GM12878 (cell line): ENCODE measurements at regions of chr3 and their contacts with region 1.

Region 1: GRCh38 chr3:43162230-43163084 is 56.6 kb upstream of the POMGNT2 start:
- DNase-seq: no peak
- ATAC-seq: peak; percentile 86
- H3K4me3 ChIP-seq: no peak overlapping the region
- H3K27ac ChIP-seq: no peak overlapping the region
- H3K4me1 ChIP-seq: no peaks in the 10 kb centered on the region; the same call in 1 of the 2 replicates
- H3K27me3 ChIP-seq: no peaks in the 10 kb centered on the region
- CTCF ChIP-seq: peak; percentile 12 to 55 (median 19); a peak in 3 of 6 replicates
- EP300 ChIP-seq: no peak
- POLR2A ChIP-seq: no peak
- RAD21 ChIP-seq: peak; percentile 63

Region 2: GRCh38 chr3:42961633-42962032 is 200.8 kb before region 1 on chr3:
- CTCF ChIA-PET with region 1: interaction called, 30 read pairs
- POLR2A ChIA-PET with region 1: no interaction called
- RAD21 ChIA-PET with region 1: interaction called, 8 read pairs
- SMC1A ChIA-PET with region 1: interaction called, 22 read pairs
- in situ Hi-C with region 1: no loop called
- intact Hi-C with region 1: no loop called
- DNase-seq: no peak
- ATAC-seq: peak; percentile 54
- H3K4me3 ChIP-seq: no peak overlapping the region
- H3K27ac ChIP-seq: no peak overlapping the region
- H3K4me1 ChIP-seq: no peaks in the 10 kb centered on the region
- H3K27me3 ChIP-seq: no peaks in the 10 kb centered on the region
- CTCF ChIP-seq: peak; percentile 42 to 54 (median 45); a peak in 4 of 6 replicates
- EP300 ChIP-seq: no peak
- POLR2A ChIP-seq: no peak
- RAD21 ChIP-seq: peak; percentile 49; the same call in 1 of the 2 replicates

Region 3: DNA sequence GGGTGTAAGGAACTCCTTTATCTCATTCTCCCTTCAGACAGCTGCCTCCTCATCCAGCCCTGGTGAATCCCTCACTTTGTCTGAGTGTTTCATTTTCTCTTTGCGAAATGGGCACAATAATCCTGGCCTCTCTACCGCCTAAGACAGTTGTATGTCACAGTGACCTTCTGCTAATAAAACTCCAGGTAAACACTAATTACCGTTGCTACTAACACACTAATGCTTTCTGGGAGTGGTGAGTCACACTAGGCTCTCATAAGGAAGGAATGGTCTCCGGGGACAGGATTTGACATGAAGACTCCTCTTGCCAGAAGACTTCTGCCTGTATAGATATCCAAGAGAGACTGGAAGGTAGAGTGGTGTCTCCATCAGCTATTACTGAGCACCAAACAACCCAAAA is 52.2 kb after region 1 on chr3:
- CTCF ChIA-PET with region 1: interaction called, 13 read pairs
- POLR2A ChIA-PET with region 1: no interaction called
- RAD21 ChIA-PET with region 1: interaction called, 13 read pairs
- SMC1A ChIA-PET with region 1: interaction called, 4 read pairs
- in situ Hi-C with region 1: no loop called
- intact Hi-C with region 1: no loop called
- DNase-seq: no peak
- ATAC-seq: no peak
- H3K4me3 ChIP-seq: no peak overlapping the region
- H3K27ac ChIP-seq: no peak overlapping the region
- H3K4me1 ChIP-seq: no peaks in the 10 kb centered on the region
- H3K27me3 ChIP-seq: no peaks in the 10 kb centered on the region
- CTCF ChIP-seq: no peak
- EP300 ChIP-seq: no peak
- POLR2A ChIP-seq: no peak
- RAD21 ChIP-seq: no peak

Region 4: DNA sequence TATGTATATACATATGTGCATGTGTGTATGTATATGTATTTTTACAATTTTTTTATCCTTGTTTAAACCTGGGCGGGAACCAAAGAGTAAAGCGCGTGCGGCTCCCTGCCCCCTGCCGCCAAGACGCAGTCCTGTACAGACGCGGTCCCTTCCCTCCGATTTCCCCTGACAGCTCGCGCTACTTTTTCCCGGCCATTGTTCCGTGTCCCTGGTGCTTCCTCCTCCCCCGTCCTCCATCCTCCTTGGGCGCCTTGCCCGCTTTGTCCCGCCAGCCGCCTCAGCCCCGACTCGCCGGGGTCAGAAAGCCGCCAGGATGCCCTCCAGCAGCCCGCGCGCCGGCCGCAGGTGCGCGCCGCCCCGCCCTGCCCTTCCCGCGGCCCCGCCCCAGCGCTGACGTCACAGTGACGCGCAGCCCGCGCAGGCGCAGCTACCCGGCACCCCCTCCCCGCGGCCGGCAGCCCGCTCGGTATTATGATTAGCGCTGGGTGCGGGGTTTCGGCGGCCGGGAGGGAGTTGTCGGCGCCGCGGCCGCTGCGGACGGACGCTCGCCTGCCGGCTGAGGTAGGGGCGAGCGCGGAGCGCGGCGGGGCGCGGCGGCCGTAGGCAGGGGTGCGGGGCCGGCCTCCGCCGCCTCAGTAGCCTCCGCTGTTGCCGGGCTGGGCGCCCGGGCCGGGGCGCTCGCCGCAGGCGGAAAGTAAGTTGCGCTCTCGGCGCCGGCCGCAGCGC is 123.8 kb after region 1 on chr3 and contains the start of gene SNRK:
- CTCF ChIA-PET with region 1: interaction called, 4 read pairs
- POLR2A ChIA-PET with region 1: no interaction called
- RAD21 ChIA-PET with region 1: interaction called, 8 read pairs
- SMC1A ChIA-PET with region 1: interaction called, 10 read pairs
- in situ Hi-C with region 1: no loop called
- intact Hi-C with region 1: no loop called
- DNase-seq: no peak
- ATAC-seq: peak; percentile 85
- H3K4me3 ChIP-seq: peak within 1 kb of the TSS; percentile 82
- H3K27ac ChIP-seq: peak within 1 kb of the TSS; percentile 68
- H3K4me1 ChIP-seq: peaks cover 11% of the 10 kb centered on the region
- H3K27me3 ChIP-seq: peaks cover 0 to 2% of the 10 kb centered on the region in 2 experiments; a peak in 1 of 4 replicates
- CTCF ChIP-seq: peak in 1 of 3 experiments; percentile 10; a peak in 2 of 6 replicates
- EP300 ChIP-seq: no peak
- POLR2A ChIP-seq: peak; percentile 68
- RAD21 ChIP-seq: no peak
- polyA plus RNA-seq, gene SNRK: 1.6 to 2.2 TPM

Region 5: GRCh38 chr3:43378066-43378935 is 215.8 kb after region 1 on chr3:
- CTCF ChIA-PET with region 1: interaction called, 84 read pairs
- POLR2A ChIA-PET with region 1: no interaction called
- RAD21 ChIA-PET with region 1: interaction called, 31 read pairs
- SMC1A ChIA-PET with region 1: interaction called, 79 read pairs
- in situ Hi-C with region 1: loop called (anchors 5 kb)
- intact Hi-C with region 1: loop called (anchors 1 kb)
- DNase-seq: peak; percentile 4
- ATAC-seq: peak; percentile 97
- H3K4me3 ChIP-seq: no peak overlapping the region
- H3K27ac ChIP-seq: no peak overlapping the region
- H3K4me1 ChIP-seq: no peaks in the 10 kb centered on the region
- H3K27me3 ChIP-seq: no peaks in the 10 kb centered on the region
- CTCF ChIP-seq: peak; percentile 81 to 85 (median 81)
- EP300 ChIP-seq: no peak
- POLR2A ChIP-seq: no peak
- RAD21 ChIP-seq: peak; percentile 86

Region 6: DNA sequence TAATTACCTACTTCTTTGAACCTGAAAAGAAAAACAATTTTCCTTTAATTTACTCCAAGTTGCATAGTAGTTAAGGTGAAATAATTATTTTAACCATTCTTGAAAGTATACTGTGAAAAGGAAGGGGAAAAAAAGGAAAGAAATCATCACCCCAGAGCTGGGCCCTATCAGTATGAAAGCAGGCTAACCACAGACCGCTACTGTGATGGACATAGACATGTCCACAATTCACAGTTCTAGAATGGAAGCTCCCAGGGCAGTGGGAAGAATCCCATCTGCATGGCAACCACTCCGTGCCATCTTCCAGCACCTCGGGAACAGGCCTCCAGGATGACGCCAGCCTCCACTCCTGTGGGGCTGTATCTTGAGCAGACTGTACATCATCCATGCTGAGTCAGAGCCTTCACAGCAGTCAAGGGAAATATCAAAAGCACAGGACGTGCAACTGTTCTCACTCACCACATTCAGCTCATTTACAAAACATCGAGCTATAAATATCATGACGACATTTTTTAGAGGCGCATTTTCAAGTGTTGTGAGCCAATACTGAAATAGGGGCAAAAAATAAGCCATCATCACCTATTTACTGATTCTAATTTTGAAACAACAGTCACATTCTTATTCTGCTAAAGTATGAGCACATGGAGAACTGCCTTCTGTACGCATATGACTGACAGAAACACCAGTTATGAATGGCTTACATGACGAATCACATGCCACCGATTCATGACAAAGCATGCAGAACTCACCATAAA is 243.6 kb after region 1 on chr3:
- CTCF ChIA-PET with region 1: no interaction called
- POLR2A ChIA-PET with region 1: no interaction called
- RAD21 ChIA-PET with region 1: no interaction called
- SMC1A ChIA-PET with region 1: no interaction called
- in situ Hi-C with region 1: no loop called
- intact Hi-C with region 1: no loop called
- DNase-seq: no peak
- ATAC-seq: no peak
- H3K4me3 ChIP-seq: no peak overlapping the region
- H3K27ac ChIP-seq: no peak overlapping the region
- H3K4me1 ChIP-seq: no peaks in the 10 kb centered on the region
- H3K27me3 ChIP-seq: no peaks in the 10 kb centered on the region
- CTCF ChIP-seq: no peak
- EP300 ChIP-seq: no peak
- POLR2A ChIP-seq: no peak
- RAD21 ChIP-seq: no peak